Gastrocnemius medialis (tissue), 4 donors: ENCODE measurements at regions of chr7 and their contacts with region 1.

Region 1: GRCh38 chr7:134553976-134554375 is 5.1 kb downstream of the AKR1B15 start:
- DNase-seq: no peak
- ATAC-seq: no peak
- H3K4me3 ChIP-seq: no peak overlapping the region
- H3K27ac ChIP-seq: no peak overlapping the region
- H3K4me1 ChIP-seq: peaks cover 7 to 12% of the 10 kb centered on the region in 2 donors
- H3K27me3 ChIP-seq: no peaks in the 10 kb centered on the region
- CTCF ChIP-seq: peak in 1 of 5 experiments; percentile 17
- POLR2A ChIP-seq: no peak

Region 2: DNA sequence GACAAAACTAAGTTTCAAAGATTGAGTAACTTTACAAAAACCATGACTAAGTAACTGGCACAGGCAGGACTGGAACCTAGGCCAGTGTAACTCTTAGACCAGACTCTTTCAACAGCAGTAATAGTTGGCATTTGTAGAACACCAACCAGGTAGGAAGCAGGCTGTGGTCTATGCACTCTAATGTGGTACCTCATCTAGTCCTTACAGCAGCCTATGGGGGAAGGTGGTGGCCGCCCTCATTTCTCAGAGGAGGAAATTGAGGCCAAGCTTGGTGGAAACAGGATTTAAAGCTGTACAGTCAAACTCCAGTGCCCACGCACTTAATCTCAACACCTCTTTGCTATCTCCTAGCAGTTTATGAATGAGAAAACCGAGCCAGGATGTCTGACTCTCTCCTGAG is 592.3 kb before region 1 on chr7:
- in situ Hi-C with region 1: no loop called
- intact Hi-C with region 1: no loop called
- DNase-seq: no peak
- ATAC-seq: no peak
- H3K4me3 ChIP-seq: no peak overlapping the region
- H3K27ac ChIP-seq: no peak overlapping the region
- H3K4me1 ChIP-seq: no peaks in the 10 kb centered on the region
- H3K27me3 ChIP-seq: no peaks in the 10 kb centered on the region
- CTCF ChIP-seq: no peak
- POLR2A ChIP-seq: no peak

Region 3: DNA sequence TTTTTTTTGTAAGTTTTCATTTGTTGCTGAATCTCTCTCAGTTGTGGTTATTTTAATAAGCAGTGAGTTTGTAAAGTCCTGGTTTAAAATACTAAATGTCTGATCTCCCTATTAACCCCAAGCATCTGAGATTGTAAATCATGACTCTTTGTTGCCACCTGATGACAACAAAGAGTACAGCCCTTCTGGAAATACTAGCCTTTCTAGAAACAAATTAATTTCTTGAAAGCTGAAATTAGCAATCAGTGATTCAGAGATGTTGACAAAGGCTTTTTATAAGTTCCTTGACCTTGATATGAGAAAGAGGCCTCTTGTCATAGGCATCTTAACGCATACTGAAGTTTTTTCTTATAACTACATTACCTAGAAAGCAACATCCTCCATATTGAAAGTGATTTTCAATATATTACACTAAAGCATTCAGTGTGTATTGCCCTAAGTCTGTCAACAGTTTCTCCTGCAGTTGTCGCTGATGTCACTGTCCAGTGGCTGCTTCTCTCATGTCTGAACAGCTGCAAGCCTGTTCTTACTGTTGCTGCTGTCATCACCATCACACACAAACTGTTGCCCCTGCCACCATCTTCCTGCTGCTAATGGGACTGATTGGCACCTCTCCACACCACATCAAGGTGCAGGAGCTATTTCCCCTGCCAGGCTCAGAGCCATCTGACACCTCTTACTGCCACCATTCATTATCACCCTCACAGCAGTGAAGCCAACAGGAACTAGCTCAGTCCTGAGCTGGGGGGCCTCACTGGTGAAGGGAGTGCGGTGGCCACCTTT is 522.0 kb before region 1 on chr7:
- in situ Hi-C with region 1: no loop called
- intact Hi-C with region 1: no loop called
- DNase-seq: no peak
- ATAC-seq: no peak
- H3K4me3 ChIP-seq: no peak overlapping the region
- H3K27ac ChIP-seq: no peak overlapping the region
- H3K4me1 ChIP-seq: no peaks in the 10 kb centered on the region
- H3K27me3 ChIP-seq: no peaks in the 10 kb centered on the region
- CTCF ChIP-seq: no peak
- POLR2A ChIP-seq: no peak

Region 4: GRCh38 chr7:134422008-134422407 is 132.0 kb before region 1 on chr7:
- in situ Hi-C with region 1: no loop called
- intact Hi-C with region 1: no loop called
- DNase-seq: no peak
- ATAC-seq: no peak
- H3K4me3 ChIP-seq: no peak overlapping the region
- H3K27ac ChIP-seq: no peak overlapping the region
- H3K4me1 ChIP-seq: no peaks in the 10 kb centered on the region
- H3K27me3 ChIP-seq: no peaks in the 10 kb centered on the region
- CTCF ChIP-seq: no peak
- POLR2A ChIP-seq: no peak

Region 5: DNA sequence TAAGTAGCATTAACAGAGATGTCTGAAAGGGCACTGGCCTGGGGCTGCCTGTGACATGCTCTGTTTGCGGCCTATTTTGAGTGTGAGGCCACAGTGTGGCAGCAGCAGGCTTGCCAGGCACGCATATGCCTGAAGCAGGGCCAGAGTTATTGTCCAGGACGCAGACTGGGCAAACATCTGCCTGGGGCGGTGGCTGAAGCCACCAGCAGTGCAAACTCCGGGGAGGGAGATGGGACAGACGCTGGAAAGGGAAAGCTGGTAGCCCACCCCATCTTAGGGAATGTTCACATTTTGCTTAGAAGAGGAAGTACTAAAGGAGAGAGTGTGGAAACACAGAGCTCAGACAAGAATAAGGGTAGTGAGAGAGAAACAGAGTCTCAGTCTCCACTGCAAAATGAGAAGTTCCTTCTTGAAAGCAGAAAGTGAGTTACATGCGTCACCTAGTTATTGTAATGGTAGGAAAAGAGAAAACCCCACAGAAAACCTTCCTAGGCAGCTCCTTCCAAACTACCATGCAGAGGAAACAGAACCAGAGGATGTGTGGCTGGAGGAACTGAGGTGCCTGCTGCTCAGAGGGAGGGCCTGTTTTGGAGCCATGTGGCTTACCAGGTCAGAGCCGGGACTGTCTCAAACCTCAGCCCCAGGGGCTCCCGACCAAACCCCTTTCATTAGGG is 109.6 kb before region 1 on chr7:
- in situ Hi-C with region 1: loop called in 1 of 4 experiments (anchors 5 kb)
- intact Hi-C with region 1: loop called (anchors 1 kb)
- DNase-seq: peak; percentile 52 to 61
- ATAC-seq: peak; percentile 82
- H3K4me3 ChIP-seq: no peak overlapping the region
- H3K27ac ChIP-seq: peak overlapping the region; percentile 59 to 83 (median 68)
- H3K4me1 ChIP-seq: peaks cover 14 to 38% of the 10 kb centered on the region in 2 donors
- H3K27me3 ChIP-seq: no peaks in the 10 kb centered on the region
- CTCF ChIP-seq: peak in 2 of 5 experiments; percentile 39 to 56
- POLR2A ChIP-seq: no peak

Region 6: DNA sequence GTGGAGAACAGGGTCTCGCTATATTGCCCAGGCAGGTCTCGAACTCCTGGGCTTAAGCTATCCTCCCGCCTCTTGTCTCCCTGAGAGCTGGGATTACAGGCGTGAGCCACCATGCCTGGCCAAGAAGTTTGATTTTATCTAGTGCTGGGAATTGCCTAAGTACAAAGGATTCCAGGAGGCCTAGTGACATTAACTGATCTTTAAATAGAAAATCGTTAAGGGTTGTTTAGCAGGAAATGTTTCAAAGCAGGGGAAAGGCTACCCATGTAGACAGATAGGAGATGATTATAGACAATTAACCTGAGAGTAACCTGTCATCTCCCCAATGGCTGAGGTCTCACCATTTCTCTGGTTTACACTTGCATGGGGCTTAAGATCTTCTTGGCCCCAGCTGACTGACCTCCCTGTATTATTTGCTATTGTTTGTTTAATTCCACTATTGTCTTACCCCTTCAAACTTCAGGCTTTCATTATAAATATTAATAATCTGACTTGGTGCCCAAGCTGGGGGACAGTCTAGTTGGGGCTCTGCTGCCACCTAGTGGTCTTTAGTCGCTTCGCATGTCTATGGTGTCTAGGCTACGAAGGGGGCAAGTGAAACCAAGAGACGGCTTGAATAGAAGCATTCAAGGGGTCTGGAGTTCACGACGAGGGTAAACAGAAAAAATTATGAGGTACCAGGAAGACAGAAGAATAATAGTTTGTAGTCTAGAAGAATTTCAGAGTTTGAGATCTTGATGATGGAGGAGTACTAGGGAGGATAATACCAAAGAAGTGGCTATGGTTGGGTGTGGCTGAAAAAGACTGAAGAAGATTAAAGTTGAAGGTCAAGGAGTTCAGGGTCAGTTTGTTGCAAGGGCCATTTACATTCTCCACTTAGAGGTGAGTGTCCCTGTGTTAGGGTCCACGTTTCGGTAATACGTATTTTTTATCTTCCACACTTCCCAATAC is 52.3 kb after region 1 on chr7:
- in situ Hi-C with region 1: loop called in 1 of 4 experiments (anchors 5 kb)
- intact Hi-C with region 1: loop called (anchors 2 kb)
- DNase-seq: peak; percentile 34 to 38
- ATAC-seq: peak; percentile 89 to 90
- H3K4me3 ChIP-seq: peak overlapping the region in 2 of 4 donors; percentile 12 to 27
- H3K27ac ChIP-seq: no peak overlapping the region
- H3K4me1 ChIP-seq: no peaks in the 10 kb centered on the region
- H3K27me3 ChIP-seq: no peaks in the 10 kb centered on the region
- CTCF ChIP-seq: peak; percentile 81 to 98 (median 89)
- POLR2A ChIP-seq: no peak

Region 7: GRCh38 chr7:134676743-134677142 is 122.8 kb after region 1 on chr7:
- in situ Hi-C with region 1: no loop called
- intact Hi-C with region 1: no loop called
- DNase-seq: no peak
- ATAC-seq: no peak
- H3K4me3 ChIP-seq: no peak overlapping the region
- H3K27ac ChIP-seq: no peak overlapping the region
- H3K4me1 ChIP-seq: peaks cover 0 to 4% of the 10 kb centered on the region in 2 donors
- H3K27me3 ChIP-seq: no peaks in the 10 kb centered on the region
- CTCF ChIP-seq: no peak
- POLR2A ChIP-seq: no peak